ENCODE measurements at regions of chr9 and their contacts with region 1.

Region 1: DNA sequence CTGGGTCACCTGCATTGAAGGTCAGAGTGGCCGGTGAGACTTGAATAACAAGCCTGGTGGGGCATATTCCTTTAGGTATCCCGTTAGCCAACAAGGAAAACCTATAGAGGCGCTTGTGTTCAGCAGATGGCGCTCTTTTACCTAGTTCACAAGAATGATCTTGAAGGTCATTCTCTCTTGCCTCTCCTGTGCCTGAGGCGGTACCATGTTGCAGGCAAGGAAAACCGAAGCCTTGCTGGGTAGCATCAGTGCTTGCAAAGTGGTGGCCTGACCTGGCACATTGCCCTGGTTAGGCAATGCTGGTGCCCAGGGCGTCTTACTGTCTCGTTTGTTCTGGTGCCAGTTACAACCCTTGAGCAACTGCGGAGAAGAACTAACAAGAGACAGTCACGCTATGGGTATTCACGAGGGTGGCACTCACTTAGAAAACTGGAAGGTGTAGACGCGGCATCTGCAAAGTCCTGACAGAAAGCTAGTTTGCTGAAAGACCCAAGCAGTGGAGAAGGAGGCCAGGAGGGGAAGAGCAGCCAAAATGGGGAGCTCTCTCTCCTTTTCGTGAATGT is 56.7 kb downstream of the AOPEP start:
- DNase-seq: peak; percentile 63
- ATAC-seq: peak; percentile 87

Region 2: GRCh38 chr9:94681508-94681907 is 101.7 kb before region 1 on chr9:
- intact Hi-C with region 1: loop called (anchors 10 kb)
- DNase-seq: peak; percentile 87
- ATAC-seq: peak; percentile 97

Region 3: GRCh38 chr9:94757158-94757557 is 26.0 kb before region 1 on chr9:
- intact Hi-C with region 1: no loop called
- DNase-seq: no peak
- ATAC-seq: no peak

Region 4: DNA sequence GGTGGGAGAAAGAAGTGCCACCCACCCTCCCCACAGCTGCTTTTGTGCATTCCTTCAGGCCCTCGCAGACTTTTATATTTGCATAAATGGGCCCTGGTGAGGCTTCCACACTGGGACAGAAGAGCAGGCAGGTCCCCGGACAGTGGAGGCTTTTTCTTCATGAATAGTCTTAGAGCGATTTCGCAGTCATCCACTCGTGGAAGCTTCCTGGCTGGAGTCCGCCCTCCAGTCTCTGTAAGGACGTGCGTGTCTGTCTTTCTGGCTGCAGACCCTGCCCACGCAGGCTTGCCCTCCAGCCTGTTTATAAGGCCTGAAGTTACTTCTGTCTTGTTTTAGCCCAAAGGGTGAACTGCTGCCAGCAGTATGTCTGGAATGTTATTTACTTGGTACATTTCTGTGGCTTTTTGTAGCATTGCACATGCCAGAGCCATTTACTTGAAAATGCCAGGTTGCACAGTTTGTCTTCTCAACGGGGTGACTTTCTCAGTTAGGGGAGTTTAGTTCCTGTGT is 139.0 kb after region 1 on chr9:
- intact Hi-C with region 1: no loop called
- DNase-seq: no peak
- ATAC-seq: peak; percentile 16

Region 5: GRCh38 chr9:95004411-95005277 is 221.5 kb after region 1 on chr9:
- intact Hi-C with region 1: loop called (anchors 5 kb)
- DNase-seq: peak; percentile 75
- ATAC-seq: peak; percentile 58

Region 6: DNA sequence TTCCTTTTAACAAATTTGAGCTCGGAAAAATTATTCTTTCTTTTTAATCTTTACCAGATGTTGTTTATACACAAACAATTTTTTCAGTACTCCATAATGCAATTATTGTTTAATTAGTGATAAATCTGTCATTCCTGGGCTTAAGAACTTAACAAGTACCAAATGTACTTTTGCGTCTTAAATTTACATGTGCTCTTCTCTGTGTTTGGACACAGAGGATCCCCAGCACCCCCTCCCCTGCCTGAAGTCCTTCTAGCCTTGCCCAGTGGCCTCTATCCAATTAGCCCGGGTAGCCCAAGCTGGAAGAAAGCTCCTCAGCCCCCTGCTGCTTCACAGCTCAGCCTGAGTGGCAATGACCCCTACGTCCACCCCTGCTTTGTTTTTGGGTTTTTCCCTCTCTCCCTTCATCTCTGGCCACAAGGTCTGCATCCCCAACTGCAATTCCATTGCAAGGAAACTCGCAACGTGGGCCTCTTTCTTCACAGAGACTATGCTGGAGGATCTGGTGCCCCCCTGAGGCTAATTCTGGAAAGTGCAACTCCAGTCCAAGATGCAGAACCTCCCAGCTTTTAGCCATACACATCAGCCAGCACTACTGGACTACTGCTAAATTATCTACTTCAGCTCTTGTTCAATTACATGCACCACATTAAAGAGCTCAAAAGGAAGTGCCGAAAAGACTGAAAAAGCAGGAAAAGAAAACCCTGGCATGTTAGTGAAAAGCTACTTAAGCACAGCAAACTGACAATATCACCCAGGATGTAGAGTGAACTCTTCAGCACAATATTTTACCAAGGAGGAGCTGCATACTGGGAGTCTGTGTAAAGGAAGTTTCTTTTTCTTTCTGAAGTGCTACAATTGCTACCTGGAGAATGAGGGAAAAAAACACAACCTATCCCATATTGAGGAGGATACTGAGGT is 348.1 kb after region 1 on chr9:
- intact Hi-C with region 1: loop called (anchors 2 kb)
- DNase-seq: peak; percentile 62
- ATAC-seq: peak; percentile 60